ENCODE measurements at regions of chr11 and their contacts with region 1.

Region 1: GRCh38 chr11:130522284-130522961 is 74.0 kb downstream of the ADAMTS15 start:
- DNase-seq: peak; percentile 91 to 94
- ATAC-seq: peak; percentile 94 to 97 (median 97)
- H3K4me3 ChIP-seq: peak overlapping the region in 1 of 10 donors; percentile 8
- H3K27ac ChIP-seq: peak overlapping the region; percentile 75 to 94 (median 88)
- H3K4me1 ChIP-seq: peaks cover 21 to 52% (median 44%) of the 10 kb centered on the region in 9 donors
- H3K27me3 ChIP-seq: no peaks in the 10 kb centered on the region
- CTCF ChIP-seq: no peak

Region 2: GRCh38 chr11:130580372-130580771 is 57.9 kb after region 1 on chr11:
- intact Hi-C with region 1: loop called in 1 of 10 experiments (anchors 2 kb)
- DNase-seq: no peak
- ATAC-seq: peak in 7 of 8 donors; percentile 19 to 78 (median 66)
- H3K4me3 ChIP-seq: no peak overlapping the region
- H3K27ac ChIP-seq: peak overlapping the region in 9 of 10 donors; percentile 22 to 72 (median 60)
- H3K4me1 ChIP-seq: peaks cover 3 to 33% (median 20%) of the 10 kb centered on the region in 9 donors
- H3K27me3 ChIP-seq: no peaks in the 10 kb centered on the region
- CTCF ChIP-seq: no peak

Region 3: GRCh38 chr11:130644187-130644586 is 121.8 kb after region 1 on chr11:
- intact Hi-C with region 1: loop called in 1 of 10 experiments (anchors 10 kb)
- DNase-seq: no peak
- ATAC-seq: no peak
- H3K4me3 ChIP-seq: no peak overlapping the region
- H3K27ac ChIP-seq: no peak overlapping the region
- H3K4me1 ChIP-seq: peaks cover 0 to 34% (median 16%) of the 10 kb centered on the region in 9 donors
- H3K27me3 ChIP-seq: no peaks in the 10 kb centered on the region
- CTCF ChIP-seq: no peak

Region 4: DNA sequence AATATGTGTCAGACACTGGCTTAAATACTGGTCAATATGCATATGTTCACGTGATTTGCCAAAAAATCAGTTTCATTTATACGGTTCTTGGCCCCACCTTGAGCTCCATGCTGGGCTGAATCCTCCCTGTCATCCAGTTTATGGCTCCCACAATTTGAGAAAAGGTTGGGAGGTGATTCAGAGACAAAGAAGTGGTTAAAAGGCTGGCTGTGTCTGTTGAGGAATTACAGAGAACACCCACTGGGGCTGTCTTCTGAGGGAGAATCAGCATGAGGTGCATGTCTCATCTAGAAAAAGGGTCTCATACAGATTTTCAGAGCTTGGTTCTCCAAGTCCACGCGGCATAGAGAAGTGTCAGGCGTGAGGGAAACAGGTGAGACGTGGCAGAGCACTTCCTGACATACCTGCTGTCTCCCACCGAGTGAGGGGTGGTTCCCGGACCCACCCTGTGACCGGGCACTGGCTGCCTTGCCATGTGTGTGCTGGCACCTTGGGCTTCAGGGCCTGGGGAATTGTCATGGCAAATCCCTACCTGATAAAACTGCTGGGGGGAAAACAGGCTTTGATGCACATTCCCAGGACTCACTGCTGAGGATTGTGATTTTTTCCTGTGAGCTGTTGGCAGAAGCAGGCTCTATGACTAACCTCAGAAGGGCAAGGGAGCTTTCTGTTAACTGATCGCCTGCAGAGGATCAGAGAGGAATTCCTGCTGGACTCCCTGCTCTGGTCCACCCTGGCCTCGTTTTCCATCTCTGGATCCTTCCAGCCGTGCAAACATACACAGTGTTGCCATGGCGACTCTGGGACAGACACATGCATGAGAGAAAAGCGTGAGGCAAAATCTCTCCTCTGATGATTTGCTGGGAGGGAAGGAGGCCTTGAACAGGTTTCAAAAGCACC is 149.6 kb after region 1 on chr11:
- intact Hi-C with region 1: loop called in 3 of 10 experiments (anchors 5 to 10 kb)
- DNase-seq: peak; percentile 59 to 83
- ATAC-seq: peak; percentile 56 to 85 (median 74)
- H3K4me3 ChIP-seq: no peak overlapping the region
- H3K27ac ChIP-seq: peak overlapping the region in 8 of 10 donors; percentile 15 to 57 (median 49)
- H3K4me1 ChIP-seq: peaks cover 8 to 49% (median 43%) of the 10 kb centered on the region in 9 donors
- H3K27me3 ChIP-seq: no peaks in the 10 kb centered on the region
- CTCF ChIP-seq: no peak

Region 5: GRCh38 chr11:130827451-130828377 is 305.3 kb after region 1 on chr11:
- intact Hi-C with region 1: loop called in 1 of 10 experiments (anchors 5 kb)
- DNase-seq: peak; percentile 63 to 64
- ATAC-seq: peak; percentile 76 to 92 (median 88)
- H3K4me3 ChIP-seq: no peak overlapping the region
- H3K27ac ChIP-seq: peak overlapping the region in 9 of 10 donors; percentile 36 to 73 (median 64)
- H3K4me1 ChIP-seq: peaks cover 3 to 43% (median 28%) of the 10 kb centered on the region in 9 donors
- H3K27me3 ChIP-seq: no peaks in the 10 kb centered on the region
- CTCF ChIP-seq: peak in 8 of 9 donors; percentile 44 to 64 (median 53)

Region 6: DNA sequence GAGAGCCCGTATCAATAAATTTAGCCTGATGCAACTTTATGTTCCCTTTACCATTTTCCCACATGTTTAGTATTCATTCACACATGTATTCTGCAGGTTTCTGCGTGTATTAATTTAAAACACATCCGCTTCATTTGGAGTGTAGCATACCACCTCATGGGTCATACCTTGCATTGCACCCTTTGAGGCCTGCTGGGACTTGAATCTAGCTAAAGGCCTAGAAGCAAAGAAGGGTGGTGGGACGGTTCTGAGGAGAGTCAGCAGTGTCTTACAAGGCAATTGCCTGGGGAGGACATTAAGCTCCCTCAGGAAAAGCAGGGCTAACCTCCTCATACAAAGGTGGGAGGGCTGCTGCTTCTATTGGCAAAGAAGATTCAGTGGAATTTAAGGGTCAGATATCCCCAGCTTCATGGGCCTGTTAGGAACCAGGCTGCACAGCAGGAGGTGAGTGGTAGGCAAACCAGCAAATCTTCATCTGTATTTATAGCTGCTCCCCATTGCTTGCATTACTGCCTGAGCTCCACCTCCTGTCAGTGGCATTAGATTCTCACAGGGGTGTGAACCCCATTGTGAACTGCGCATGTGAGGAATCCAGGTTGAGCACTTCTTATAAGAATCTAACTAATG is 409.8 kb after region 1 on chr11:
- intact Hi-C with region 1: no loop called
- DNase-seq: no peak
- ATAC-seq: no peak
- H3K4me3 ChIP-seq: no peak overlapping the region
- H3K27ac ChIP-seq: no peak overlapping the region
- H3K4me1 ChIP-seq: no peaks in the 10 kb centered on the region
- H3K27me3 ChIP-seq: no peaks in the 10 kb centered on the region
- CTCF ChIP-seq: no peak